ENCODE measurements at regions of chr6 and their contacts with region 1.

Region 1: DNA sequence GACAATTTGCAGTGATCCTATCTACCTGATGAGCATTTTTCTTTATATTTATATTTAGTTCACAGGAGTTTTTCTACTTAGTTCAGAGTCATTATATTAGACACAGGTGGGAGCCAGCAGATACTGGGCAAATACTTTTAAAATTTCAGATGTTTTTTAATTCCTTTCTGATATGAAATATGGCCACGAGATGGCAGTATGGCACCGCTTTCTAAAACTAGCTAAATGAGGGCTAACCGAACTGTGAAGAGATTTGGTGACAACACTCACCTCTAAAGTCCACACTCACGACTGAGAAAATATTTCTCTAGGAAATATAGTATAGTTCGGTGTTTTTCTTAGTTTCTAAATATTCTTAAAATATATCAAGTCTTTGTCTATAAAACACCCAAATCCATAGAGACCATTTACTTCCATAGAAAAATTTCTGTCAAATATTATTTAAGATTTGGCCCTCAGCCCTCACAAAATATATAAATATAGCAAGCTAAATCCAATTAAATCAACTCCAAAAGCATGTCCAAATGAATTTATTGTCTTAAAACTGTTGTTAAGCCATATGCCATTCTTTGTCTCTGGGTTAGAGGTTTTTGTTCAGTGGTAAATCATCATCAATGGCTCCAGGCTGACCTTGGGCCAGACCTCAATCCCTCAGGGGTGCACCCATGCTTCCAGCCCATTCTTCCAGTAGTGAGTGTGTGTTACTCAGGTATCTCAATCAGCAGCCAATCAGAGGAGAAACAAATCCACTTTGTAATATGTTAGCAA is 63.6 kb downstream of the HUS1B start:
- DNase-seq: peak; percentile 54 to 81 (median 60)
- ATAC-seq: peak; percentile 92
- H3K4me3 ChIP-seq: no peak overlapping the region
- H3K27ac ChIP-seq: no peak overlapping the region
- H3K4me1 ChIP-seq: no peaks in the 10 kb centered on the region
- H3K27me3 ChIP-seq: no peaks in the 10 kb centered on the region
- CTCF ChIP-seq: peak; percentile 51 to 87 (median 60); a peak in 4 of 6 replicates
- EP300 ChIP-seq: no peak
- POLR2A ChIP-seq: no peak
- RAD21 ChIP-seq: peak; percentile 90 to 92

Region 2: DNA sequence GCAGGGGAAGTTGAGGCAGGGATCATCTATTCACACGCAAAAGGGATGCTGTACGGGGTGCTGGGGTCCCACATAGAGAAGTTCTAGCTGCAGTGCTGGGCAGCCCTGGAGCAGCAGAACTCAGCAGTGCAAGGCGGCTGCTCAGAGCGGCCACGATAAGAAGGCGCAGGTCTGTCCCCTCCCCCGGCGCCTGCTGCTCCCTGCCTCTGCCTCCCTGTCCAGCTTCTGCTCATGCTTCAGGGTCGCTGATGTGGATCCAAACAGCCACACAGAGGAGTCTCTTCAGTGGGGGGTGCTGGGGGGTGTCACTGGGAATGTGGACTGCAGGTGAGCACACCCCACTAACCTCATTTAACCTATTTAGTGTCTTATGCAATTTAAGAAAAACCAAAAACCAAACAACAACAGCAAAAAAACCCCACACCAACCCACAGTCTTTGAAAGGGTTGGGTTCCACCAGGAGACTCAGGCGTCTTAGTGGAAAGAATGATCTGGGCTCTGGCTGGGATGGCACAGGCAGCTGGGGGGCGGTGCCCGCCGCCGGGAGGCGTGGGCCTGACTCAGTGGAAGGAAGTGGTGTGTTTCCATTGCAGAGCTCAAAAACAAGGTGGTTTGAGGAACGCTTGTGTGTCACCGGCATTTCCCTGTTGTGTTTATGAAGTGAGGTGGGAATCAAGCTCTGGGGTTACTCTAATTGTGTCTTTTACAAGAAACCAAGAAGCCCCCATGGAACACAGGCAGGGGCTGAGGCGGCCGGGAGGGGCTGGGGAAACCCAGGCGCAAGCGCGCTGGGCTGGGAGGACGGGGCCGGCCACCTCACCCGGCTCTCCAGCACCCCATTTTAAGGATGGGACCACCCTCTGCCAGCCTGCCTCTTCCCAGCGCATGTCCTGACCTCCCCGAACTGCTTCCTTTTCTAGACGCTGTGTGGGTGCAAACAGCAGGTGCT is 146.6 kb before region 1 on chr6:
- CTCF ChIA-PET with region 1: no interaction called
- POLR2A ChIA-PET with region 1: no interaction called
- in situ Hi-C with region 1: no loop called
- intact Hi-C with region 1: no loop called
- DNase-seq: no peak
- ATAC-seq: peak; percentile 43
- H3K4me3 ChIP-seq: no peak overlapping the region
- H3K27ac ChIP-seq: no peak overlapping the region
- H3K4me1 ChIP-seq: peaks cover 0 to 6% of the 10 kb centered on the region in 2 experiments; a peak in 1 of 5 replicates
- H3K27me3 ChIP-seq: peaks cover 40 to 88% of the 10 kb centered on the region in 2 experiments
- CTCF ChIP-seq: no peak
- EP300 ChIP-seq: no peak
- POLR2A ChIP-seq: no peak
- RAD21 ChIP-seq: no peak

Region 3: DNA sequence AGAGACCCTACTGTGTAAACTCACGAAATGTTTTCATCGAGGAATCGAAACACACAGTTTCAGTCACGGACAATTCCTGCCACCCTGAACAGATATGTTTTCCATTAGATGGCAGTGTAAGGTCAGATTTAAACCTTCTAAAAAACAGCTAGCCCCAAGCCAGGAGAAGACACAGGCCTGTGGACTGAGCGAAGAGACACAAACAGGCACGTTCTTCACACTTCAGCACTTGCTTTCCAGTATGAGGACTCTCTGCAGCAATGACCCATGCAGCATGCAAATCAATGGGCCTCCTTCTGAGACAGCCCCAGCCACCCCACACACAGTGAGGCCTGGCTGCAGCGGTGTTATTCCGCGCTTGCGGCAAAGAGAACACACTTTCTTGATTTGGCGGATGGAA is 31.7 kb after region 1 on chr6:
- CTCF ChIA-PET with region 1: no interaction called
- POLR2A ChIA-PET with region 1: no interaction called
- in situ Hi-C with region 1: no loop called
- intact Hi-C with region 1: loop called (anchors 2 kb)
- DNase-seq: peak in 2 of 4 experiments; percentile 22 to 40
- ATAC-seq: peak; percentile 74
- H3K4me3 ChIP-seq: no peak overlapping the region
- H3K27ac ChIP-seq: no peak overlapping the region
- H3K4me1 ChIP-seq: peaks cover 5 to 6% of the 10 kb centered on the region in 2 experiments; a peak in 2 of 5 replicates
- H3K27me3 ChIP-seq: no peaks in the 10 kb centered on the region; a peak in 1 of 5 replicates
- CTCF ChIP-seq: peak in 2 of 3 experiments; percentile 33 to 45; a peak in 3 of 6 replicates
- EP300 ChIP-seq: no peak
- POLR2A ChIP-seq: no peak
- RAD21 ChIP-seq: peak; percentile 35 to 48

Region 4: GRCh38 chr6:701700-702479 is 108.6 kb after region 1 on chr6:
- CTCF ChIA-PET with region 1: no interaction called
- POLR2A ChIA-PET with region 1: no interaction called
- in situ Hi-C with region 1: no loop called
- intact Hi-C with region 1: loop called (anchors 5 kb)
- DNase-seq: no peak
- ATAC-seq: peak; percentile 59
- H3K4me3 ChIP-seq: no peak overlapping the region
- H3K27ac ChIP-seq: no peak overlapping the region
- H3K4me1 ChIP-seq: no peaks in the 10 kb centered on the region; a peak in 2 of 5 replicates
- H3K27me3 ChIP-seq: peaks cover 42 to 47% of the 10 kb centered on the region in 2 experiments
- CTCF ChIP-seq: peak; percentile 25 to 43 (median 41); a peak in 4 of 6 replicates
- EP300 ChIP-seq: no peak
- POLR2A ChIP-seq: no peak
- RAD21 ChIP-seq: 0 out of 4 replicates have a peak, but pooled peaks of 1 of the 2 experiments have one; percentile 15

Region 5: DNA sequence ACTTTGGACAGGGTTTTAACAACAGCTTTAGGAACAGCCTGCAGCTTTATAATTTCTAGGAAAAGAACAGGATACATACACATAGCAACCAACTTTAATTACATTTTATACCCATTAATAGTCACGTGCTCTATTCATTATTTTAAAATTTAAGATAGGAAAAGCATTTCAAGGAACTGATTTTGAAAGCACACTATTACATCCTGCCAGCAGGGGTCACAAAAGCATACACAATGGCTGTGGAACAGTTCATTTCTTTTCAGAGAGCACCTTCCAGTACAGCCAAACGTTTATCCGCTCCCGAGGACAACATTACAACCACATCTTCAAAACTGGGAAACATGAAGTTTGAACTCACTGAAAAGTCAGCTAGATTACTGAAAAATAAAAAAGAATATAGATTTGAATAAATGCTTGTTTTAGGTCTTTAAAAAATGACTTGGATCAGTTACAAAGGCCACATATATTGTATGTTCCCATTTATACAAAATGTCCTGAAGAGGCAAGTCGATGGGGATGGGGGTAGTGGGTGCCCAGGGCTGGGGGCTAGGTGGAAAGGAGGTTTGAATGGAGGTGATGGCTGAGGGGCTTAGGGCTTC is 204.3 kb after region 1 on chr6:
- CTCF ChIA-PET with region 1: no interaction called
- POLR2A ChIA-PET with region 1: no interaction called
- in situ Hi-C with region 1: loop called (anchors 10 kb)
- intact Hi-C with region 1: no loop called
- DNase-seq: peak; percentile 33 to 66 (median 48)
- ATAC-seq: peak; percentile 86
- H3K4me3 ChIP-seq: no peak overlapping the region
- H3K27ac ChIP-seq: no peak overlapping the region
- H3K4me1 ChIP-seq: no peaks in the 10 kb centered on the region
- H3K27me3 ChIP-seq: peaks cover 20 to 43% of the 10 kb centered on the region in 2 experiments
- CTCF ChIP-seq: peak; percentile 55 to 80 (median 69); a peak in 5 of 6 replicates
- EP300 ChIP-seq: no peak
- POLR2A ChIP-seq: no peak
- RAD21 ChIP-seq: peak; percentile 90 to 91

Region 6: GRCh38 chr6:1396952-1397868 is 803.9 kb after region 1 on chr6:
- CTCF ChIA-PET with region 1: interaction called, 6 read pairs
- POLR2A ChIA-PET with region 1: no interaction called
- in situ Hi-C with region 1: loop called (anchors 25 kb)
- intact Hi-C with region 1: loop called (anchors 1 kb)
- DNase-seq: peak; percentile 82 to 87 (median 85)
- ATAC-seq: peak; percentile 95
- H3K4me3 ChIP-seq: no peak overlapping the region
- H3K27ac ChIP-seq: no peak overlapping the region
- H3K4me1 ChIP-seq: peaks cover 0 to 16% of the 10 kb centered on the region in 2 experiments; a peak in 2 of 5 replicates
- H3K27me3 ChIP-seq: peaks cover 48 to 65% of the 10 kb centered on the region in 2 experiments
- CTCF ChIP-seq: peak; percentile 89 to 99 (median 93)
- EP300 ChIP-seq: no peak
- POLR2A ChIP-seq: no peak
- RAD21 ChIP-seq: peak; percentile 77 to 88

Region 7: DNA sequence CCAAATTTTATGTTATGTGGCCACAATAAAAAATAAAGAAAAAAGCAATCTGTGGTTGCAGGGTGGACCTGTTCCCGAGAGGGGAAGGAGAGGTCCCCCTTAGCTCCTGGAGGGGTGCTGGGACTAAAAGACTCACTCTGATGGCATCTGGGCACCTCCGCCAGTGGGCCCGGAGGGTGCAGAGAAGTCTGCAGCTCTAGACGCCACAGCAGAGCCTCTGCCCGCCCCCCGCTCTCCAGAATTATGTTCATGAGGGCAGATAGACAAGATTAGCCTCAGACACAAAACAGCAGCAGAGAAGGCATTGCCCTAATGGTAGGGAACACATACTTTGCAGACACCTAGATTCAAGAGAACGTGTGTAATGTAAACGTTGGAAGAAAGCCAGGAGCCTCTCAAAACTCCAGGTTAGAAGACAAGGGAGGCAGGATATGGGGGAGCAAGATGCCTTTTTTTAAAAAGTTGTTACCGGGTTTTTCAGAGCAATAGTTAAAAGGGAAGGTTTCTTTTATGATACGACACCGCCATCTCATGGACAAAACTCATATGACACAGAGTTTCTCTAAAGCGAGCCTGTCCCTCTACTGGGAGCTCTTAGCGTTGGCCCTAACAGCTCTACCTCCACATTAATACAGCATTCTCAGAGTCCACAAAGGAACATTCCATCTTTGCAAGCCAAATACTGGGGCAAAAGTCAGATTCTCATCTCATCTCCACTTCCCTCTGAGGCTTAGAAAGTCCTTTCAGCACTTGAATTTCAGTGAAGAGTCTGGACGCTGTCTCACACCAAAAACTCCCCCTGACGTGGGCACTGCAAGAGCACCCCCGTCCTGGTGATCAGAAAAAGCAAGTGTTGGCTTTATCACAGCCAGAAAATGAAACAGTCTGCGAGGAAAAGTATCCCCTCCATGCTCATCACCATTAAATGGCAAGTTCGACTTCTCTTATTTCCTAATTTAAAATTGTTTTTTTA is 843.3 kb after region 1 on chr6:
- CTCF ChIA-PET with region 1: interaction called, 14 read pairs
- POLR2A ChIA-PET with region 1: no interaction called
- in situ Hi-C with region 1: no loop called
- intact Hi-C with region 1: loop called (anchors 5 kb)
- DNase-seq: peak; percentile 73 to 79 (median 76)
- ATAC-seq: peak; percentile 99
- H3K4me3 ChIP-seq: no peak overlapping the region
- H3K27ac ChIP-seq: no peak overlapping the region
- H3K4me1 ChIP-seq: no peaks in the 10 kb centered on the region
- H3K27me3 ChIP-seq: peaks cover 2 to 14% of the 10 kb centered on the region in 2 experiments; a peak in 2 of 5 replicates
- CTCF ChIP-seq: peak; percentile 78 to 97 (median 97)
- EP300 ChIP-seq: no peak
- POLR2A ChIP-seq: no peak
- RAD21 ChIP-seq: peak; percentile 77 to 85

Measured in K562 (cell line).